Natural killer cell (primary cell): ENCODE measurements at regions of chr3 and their contacts with region 1.

Region 1: DNA sequence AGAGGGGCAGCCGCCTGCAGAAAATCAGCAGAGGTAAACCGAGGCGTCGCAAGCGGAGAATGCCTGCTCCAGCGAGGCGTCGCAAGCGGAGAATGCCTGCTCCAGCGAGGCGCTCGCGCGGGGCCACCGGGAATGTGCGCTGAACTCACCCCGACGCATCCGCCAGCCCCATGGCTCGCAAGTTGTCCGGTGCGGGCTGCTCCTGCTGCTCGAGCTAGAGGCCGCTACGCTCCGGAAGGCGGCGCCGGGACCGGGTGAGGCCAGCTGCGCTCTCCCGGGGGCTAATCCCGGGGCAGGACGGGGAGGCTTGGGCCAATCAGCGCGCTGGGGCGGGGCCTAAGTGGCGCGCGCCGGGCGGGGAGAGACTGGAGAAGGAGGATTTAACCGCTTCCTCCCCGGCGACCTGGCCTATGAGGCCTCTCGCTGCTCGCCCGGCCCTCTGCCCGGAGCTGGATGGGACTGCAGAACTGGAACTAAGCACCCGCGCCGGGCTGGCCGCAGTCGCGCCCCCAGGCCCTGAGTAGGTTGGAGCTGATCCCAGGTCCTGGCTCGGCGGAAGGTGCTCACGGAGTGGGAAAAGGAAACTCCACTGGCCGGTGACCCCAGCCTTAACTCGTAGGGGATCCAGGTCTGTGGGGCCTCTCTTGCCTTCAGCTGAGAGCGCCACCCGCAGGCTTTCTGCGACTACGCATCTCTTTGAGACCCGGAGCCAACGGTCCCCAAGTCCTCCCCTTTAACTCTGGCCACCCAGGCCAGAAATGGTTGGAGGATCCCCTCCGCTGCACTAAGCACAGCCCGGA is at the start of gene SLC26A6:
- DNase-seq: peak; percentile 86 to 94
- ATAC-seq: peak; percentile 95 to 96 (median 96)
- H3K4me3 ChIP-seq: peak within 1 kb of the TSS; percentile 83
- H3K4me3 Mint-ChIP-seq: peak within 1 kb of the TSS; percentile 93
- H3K27ac ChIP-seq: peak within 1 kb of the TSS; percentile 49
- H3K27ac Mint-ChIP-seq: peak within 1 kb of the TSS; percentile 62 to 81
- H3K4me1 ChIP-seq: peaks cover 23% of the 10 kb centered on the region
- H3K4me1 Mint-ChIP-seq: peaks cover 0 to 31% of the 10 kb centered on the region in 2 donors
- H3K27me3 ChIP-seq: no peaks in the 10 kb centered on the region
- H3K27me3 Mint-ChIP-seq: no peaks in the 10 kb centered on the region
- CTCF ChIP-seq: peak; percentile 42
- total RNA-seq, gene SLC26A6: 25.8 to 37.6 (median 32.3) TPM

Region 2: GRCh38 chr3:48543271-48543866 is 92.1 kb before region 1 on chr3:
- intact Hi-C with region 1: no loop called
- DNase-seq: no peak
- ATAC-seq: no peak
- H3K4me3 ChIP-seq: no peak overlapping the region
- H3K4me3 Mint-ChIP-seq: no peak overlapping the region
- H3K27ac ChIP-seq: no peak overlapping the region
- H3K27ac Mint-ChIP-seq: no peak overlapping the region
- H3K4me1 ChIP-seq: no peaks in the 10 kb centered on the region
- H3K4me1 Mint-ChIP-seq: no peaks in the 10 kb centered on the region
- H3K27me3 ChIP-seq: no peaks in the 10 kb centered on the region
- H3K27me3 Mint-ChIP-seq: no peaks in the 10 kb centered on the region
- CTCF ChIP-seq: no peak

Region 3: DNA sequence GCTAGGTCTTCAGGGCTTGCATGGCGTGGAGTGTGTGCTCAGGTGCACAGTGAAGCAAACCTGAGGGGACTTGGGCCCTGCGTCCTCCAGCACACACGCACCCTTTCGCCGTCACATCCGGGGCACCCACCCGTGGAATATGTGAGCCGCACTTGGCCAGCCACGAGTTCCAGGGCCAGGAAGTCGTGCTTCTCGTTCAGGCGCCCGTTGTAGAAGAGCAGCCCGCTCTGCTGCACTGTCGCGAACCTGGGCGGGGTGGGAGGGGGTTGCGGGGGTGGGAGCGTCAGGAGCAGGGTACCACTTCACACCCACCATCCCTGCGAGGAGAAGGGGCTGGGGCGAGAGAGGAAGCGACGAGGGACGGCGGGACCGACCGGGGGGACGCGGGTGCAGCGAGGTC is 20.2 kb after region 1 on chr3:
- intact Hi-C with region 1: loop called (anchors 1 kb)
- DNase-seq: peak in 1 of 2 donors; percentile 75
- ATAC-seq: peak; percentile 24 to 52 (median 31)
- H3K4me3 ChIP-seq: peak overlapping the region; percentile 49
- H3K4me3 Mint-ChIP-seq: peak overlapping the region; percentile 75
- H3K27ac ChIP-seq: peak overlapping the region; percentile 58
- H3K27ac Mint-ChIP-seq: peak overlapping the region; percentile 31 to 73
- H3K4me1 ChIP-seq: peaks cover 21% of the 10 kb centered on the region
- H3K4me1 Mint-ChIP-seq: peaks cover 5 to 8% of the 10 kb centered on the region in 2 donors
- H3K27me3 ChIP-seq: peaks cover under 1% of the 10 kb centered on the region
- H3K27me3 Mint-ChIP-seq: peaks cover 7 to 8% of the 10 kb centered on the region in 2 donors
- CTCF ChIP-seq: no peak